ENCODE measurements at regions of chrX and their contacts with region 1.

Region 1: GRCh38 chrX:39730662-39731397 is 366.9 kb downstream of the BCOR start:
- DNase-seq: peak; percentile 71
- H3K4me3 ChIP-seq: no peak overlapping the region
- H3K27ac ChIP-seq: peak overlapping the region; percentile 2
- H3K4me1 ChIP-seq: peaks cover 29% of the 10 kb centered on the region
- H3K27me3 ChIP-seq: no peaks in the 10 kb centered on the region
- CTCF ChIP-seq: peak; percentile 47 to 60
- POLR2A ChIP-seq: no peak

Region 2: DNA sequence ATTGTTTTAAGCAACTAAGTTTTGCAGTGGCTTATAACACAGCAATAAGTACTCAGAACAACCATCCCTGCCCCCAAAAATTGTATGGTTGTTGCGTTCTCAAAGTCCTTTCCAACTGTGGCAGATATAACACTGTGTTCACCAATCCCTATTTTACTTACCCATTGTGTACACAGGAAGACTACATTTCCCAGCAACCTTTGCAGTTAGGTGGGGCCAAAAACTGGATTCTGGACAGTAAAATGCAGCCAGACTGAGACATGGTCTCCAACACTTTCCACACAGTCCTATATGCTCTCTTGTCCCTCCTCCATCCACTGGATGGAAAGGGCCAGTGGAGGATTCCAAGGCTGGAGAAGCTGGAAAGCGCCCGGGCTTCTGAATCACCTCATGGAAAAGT is 156.7 kb before region 1 on chrX:
- CTCF ChIA-PET with region 1: no interaction called
- POLR2A ChIA-PET with region 1: no interaction called
- dilution Hi-C with region 1: no loop called
- intact Hi-C with region 1: no loop called
- DNase-seq: no peak
- H3K4me3 ChIP-seq: no peak overlapping the region
- H3K27ac ChIP-seq: no peak overlapping the region
- H3K4me1 ChIP-seq: no peaks in the 10 kb centered on the region
- H3K27me3 ChIP-seq: peaks cover 0 to 3% of the 10 kb centered on the region in 2 experiments
- CTCF ChIP-seq: no peak
- POLR2A ChIP-seq: no peak

Region 3: DNA sequence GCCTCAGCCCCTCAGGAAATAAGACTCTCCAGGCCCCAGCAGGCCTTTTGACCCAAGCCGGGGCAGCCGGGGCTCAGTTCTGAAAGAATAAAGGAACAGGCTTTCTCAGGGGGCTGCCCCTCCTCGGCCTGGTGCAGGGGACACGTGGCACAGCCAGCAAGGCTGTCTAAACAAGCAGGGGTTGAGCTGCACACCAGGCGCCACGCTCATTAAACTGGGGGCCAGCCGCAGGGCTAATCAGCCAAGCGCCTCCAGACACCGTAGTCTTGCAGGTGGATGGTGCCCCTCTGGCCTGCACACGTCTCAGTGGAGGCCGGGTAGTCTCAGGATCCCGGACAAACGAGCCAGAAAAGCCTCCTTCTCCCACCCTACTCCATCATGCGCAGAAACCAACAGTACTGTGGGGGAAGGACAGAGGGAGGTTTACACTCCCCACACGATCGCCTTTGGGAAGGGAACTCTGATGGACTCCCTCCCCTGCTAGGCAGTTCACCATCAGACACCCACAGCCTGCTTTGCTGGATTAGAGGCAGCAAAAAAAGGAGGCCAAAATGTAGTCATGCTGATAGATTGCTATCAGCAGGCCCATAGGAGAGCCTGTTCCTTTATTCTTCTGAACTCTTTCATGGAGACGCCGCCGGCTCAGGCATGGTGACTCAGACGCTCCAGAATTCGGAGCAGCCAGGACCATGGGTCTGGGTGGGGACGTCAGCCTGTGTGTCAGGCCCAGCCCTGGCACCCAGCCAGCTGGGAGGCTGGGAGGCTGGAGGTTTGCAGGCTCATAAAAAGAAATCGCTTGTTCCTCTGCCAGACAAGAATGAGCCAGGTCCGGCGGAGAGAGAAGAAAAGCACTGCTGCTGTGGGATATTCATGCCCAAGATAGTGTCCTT is 24.6 kb after region 1 on chrX:
- CTCF ChIA-PET with region 1: interaction called, 12 read pairs
- POLR2A ChIA-PET with region 1: no interaction called
- dilution Hi-C with region 1: no loop called
- intact Hi-C with region 1: loop called (anchors 1 kb)
- DNase-seq: peak; percentile 92
- H3K4me3 ChIP-seq: no peak overlapping the region
- H3K27ac ChIP-seq: peak overlapping the region; percentile 95
- H3K4me1 ChIP-seq: peaks cover 64% of the 10 kb centered on the region
- H3K27me3 ChIP-seq: no peaks in the 10 kb centered on the region
- CTCF ChIP-seq: no peak
- POLR2A ChIP-seq: no peak

Region 4: DNA sequence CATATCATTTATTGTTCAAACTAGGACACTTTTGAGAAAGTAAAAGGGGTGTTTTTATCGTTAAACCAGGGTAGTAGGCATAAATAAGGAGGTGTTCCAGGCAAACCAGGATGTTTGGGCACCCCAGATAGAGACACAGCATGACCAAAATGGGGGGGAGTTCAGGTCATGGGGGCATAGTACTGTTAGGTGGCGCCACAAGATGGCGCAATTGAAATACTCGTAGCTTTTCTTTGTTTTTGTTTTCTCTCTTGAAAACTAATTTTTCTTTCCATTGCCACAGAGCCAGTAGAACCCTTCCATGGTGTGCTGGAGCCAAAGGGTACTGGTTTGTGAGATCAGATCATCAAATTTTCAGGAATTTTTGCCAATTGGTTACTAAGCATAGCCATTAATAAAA is 83.6 kb after region 1 on chrX:
- CTCF ChIA-PET with region 1: interaction called, 15 read pairs
- POLR2A ChIA-PET with region 1: no interaction called
- dilution Hi-C with region 1: no loop called
- intact Hi-C with region 1: loop called (anchors 1 kb)
- DNase-seq: peak; percentile 20
- H3K4me3 ChIP-seq: no peak overlapping the region
- H3K27ac ChIP-seq: no peak overlapping the region
- H3K4me1 ChIP-seq: peaks cover 16% of the 10 kb centered on the region
- H3K27me3 ChIP-seq: no peaks in the 10 kb centered on the region
- CTCF ChIP-seq: peak; percentile 27 to 31
- POLR2A ChIP-seq: no peak

Region 5: DNA sequence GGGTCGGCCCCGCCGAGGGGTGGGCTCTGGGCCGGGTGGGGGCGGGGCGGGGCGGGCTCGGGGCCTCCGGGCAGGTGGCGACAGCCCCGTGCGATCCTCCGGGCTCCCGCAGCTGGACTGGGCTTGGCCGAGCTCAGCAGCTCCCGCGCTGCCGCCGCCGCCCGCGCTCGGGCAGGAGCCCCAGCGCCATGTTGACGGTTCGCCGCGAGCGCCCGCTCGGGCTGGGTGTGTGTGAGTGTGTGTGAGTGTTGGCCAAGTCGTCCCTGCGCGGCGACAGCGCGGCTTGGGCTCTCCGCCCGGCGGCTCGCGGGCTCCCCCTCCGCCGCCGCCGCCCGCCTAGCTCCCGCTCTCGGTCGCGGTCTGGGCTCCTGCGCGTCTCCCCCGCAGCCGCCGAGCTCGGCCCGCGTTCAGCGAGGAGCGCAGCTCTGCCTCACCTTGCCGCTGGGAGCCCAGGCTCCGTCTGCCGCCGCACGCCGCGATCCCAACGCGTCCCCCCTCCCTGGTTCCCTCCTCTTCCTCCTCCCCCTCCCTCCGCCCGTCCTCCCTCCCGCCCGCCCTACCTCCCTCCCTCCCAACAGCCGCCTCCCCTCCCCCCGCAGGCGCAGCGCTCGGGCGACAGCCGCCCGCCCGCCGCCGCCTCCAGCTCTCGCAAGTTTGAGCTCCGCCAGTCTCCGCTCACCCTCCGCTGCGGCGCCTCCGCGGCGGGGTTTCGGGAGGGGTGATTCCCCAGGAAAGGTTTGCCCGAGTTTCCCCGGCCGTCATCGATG is 366.9 kb after region 1 on chrX and contains the start of gene BCOR:
- CTCF ChIA-PET with region 1: interaction called, 8 read pairs
- POLR2A ChIA-PET with region 1: no interaction called
- dilution Hi-C with region 1: no loop called
- intact Hi-C with region 1: loop called (anchors 5 kb)
- DNase-seq: peak; percentile 51
- H3K4me3 ChIP-seq: peak within 1 kb of the TSS; percentile 55 to 72 (median 59)
- H3K27ac ChIP-seq: peak within 1 kb of the TSS; percentile 41
- H3K4me1 ChIP-seq: peaks cover 12% of the 10 kb centered on the region
- H3K27me3 ChIP-seq: no peaks in the 10 kb centered on the region
- CTCF ChIP-seq: no peak
- POLR2A ChIP-seq: peak; percentile 74
- total RNA-seq, gene BCOR: 23.9 and 24.2 TPM in 2 replicates

Region 6: DNA sequence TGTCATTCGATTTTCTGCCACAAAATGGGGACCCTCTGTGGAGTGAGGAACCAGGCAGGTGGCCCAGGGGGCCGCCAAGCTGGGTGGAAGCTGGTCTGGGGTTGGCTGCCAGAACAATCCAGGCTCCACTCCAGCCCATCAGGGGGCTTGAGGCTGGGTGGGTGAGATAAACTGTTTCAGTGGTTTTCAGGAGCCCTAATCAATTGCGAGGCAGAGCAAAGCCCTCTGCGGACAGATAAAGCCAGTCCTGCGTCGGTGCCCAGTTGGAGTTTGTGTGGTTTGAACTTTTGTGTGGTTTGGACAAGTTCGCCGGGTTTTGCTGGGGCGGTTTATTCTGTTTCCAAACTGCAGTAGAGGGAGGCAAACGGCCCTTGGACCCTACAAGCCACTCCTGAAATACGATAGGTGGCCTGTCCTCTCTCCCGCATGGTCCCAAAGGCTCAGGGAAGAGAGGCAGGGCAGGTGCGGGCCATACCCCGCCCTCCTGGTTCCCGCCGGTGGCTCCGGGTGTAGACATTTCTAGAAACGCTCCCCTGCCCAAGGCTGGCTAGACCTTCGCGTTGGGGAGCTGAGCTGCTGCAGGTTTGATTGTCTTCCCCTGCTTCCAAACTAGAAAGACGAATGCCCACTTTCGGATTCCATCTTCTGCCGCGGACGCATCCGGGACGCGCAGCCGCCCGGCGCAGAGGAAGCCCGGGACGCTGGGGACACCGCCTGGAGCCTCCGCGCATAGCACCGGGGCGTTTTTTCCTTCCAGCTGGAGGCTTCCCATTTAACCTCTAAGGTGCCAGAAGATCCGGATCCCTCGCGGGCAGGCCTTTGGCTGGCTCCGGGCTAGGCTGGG is 535.9 kb after region 1 on chrX:
- CTCF ChIA-PET with region 1: interaction called, 14 read pairs
- POLR2A ChIA-PET with region 1: no interaction called
- dilution Hi-C with region 1: no loop called
- intact Hi-C with region 1: loop called (anchors 2 kb)
- DNase-seq: peak; percentile 45
- H3K4me3 ChIP-seq: peak overlapping the region in 2 of 3 experiments; percentile 10 to 38
- H3K27ac ChIP-seq: peak overlapping the region; percentile 37
- H3K4me1 ChIP-seq: peaks cover 20% of the 10 kb centered on the region
- H3K27me3 ChIP-seq: no peaks in the 10 kb centered on the region
- CTCF ChIP-seq: peak; percentile 68 to 71
- POLR2A ChIP-seq: no peak

Measured in endothelial cell of umbilical vein (primary cell).